CD4-positive, alpha-beta memory T cell (primary cell): ENCODE measurements at regions of chr16 and their contacts with region 1.

Region 1: GRCh38 chr16:78770353-78771091 is 671.1 kb downstream of the WWOX start:
- DNase-seq: peak; percentile 73 to 80 (median 77)
- H3K4me3 ChIP-seq: no peak overlapping the region
- H3K4me3 Mint-ChIP-seq: peak overlapping the region in 3 of 8 donors; percentile 4 to 48 (median 33)
- H3K27ac ChIP-seq: no peak overlapping the region
- H3K27ac Mint-ChIP-seq: peak overlapping the region; percentile 5 to 83 (median 31)
- H3K4me1 ChIP-seq: peaks cover 24% of the 10 kb centered on the region
- H3K4me1 Mint-ChIP-seq: peaks cover 17 to 30% (median 21%) of the 10 kb centered on the region in 4 donors
- H3K27me3 ChIP-seq: no peaks in the 10 kb centered on the region
- H3K27me3 Mint-ChIP-seq: peaks cover 0 to 2% of the 10 kb centered on the region in 2 donors

Region 2: DNA sequence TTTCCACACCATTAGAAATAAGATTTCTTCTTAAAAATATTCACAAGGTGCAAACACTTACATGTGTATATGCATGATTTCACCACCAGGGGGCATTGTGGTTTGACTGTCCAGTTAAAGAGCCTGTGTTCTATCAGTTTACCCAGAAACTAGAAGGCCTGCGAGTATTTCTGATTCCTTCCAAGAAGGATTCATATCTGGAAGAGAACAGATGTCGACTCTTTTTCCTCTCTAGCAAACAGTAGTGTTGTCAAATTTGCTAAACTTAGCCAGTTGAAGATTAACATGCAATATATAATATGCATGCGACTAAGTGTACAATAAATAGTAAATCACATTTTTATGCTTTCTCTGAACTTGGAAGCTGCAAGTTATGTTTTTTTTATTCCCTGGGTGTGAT is 266.9 kb before region 1 on chr16:
- CTCF ChIA-PET with region 1: interaction called, 51 read pairs
- POLR2A ChIA-PET with region 1: no interaction called
- intact Hi-C with region 1: loop called (anchors 1 kb)
- DNase-seq: peak; percentile 41 to 54 (median 48)
- H3K4me3 ChIP-seq: no peak overlapping the region
- H3K4me3 Mint-ChIP-seq: no peak overlapping the region
- H3K27ac ChIP-seq: no peak overlapping the region
- H3K27ac Mint-ChIP-seq: no peak overlapping the region
- H3K4me1 ChIP-seq: no peaks in the 10 kb centered on the region
- H3K4me1 Mint-ChIP-seq: no peaks in the 10 kb centered on the region
- H3K27me3 ChIP-seq: no peaks in the 10 kb centered on the region
- H3K27me3 Mint-ChIP-seq: no peaks in the 10 kb centered on the region

Region 3: GRCh38 chr16:78742501-78743283 is 27.8 kb before region 1 on chr16:
- CTCF ChIA-PET with region 1: interaction called, 13 read pairs
- POLR2A ChIA-PET with region 1: interaction called, 7 read pairs
- intact Hi-C with region 1: loop called (anchors 1 kb)
- DNase-seq: peak; percentile 73 to 91 (median 80)
- H3K4me3 ChIP-seq: peak overlapping the region; percentile 64 to 82
- H3K4me3 Mint-ChIP-seq: peak overlapping the region; percentile 81 to 90 (median 88)
- H3K27ac ChIP-seq: peak overlapping the region; percentile 81
- H3K27ac Mint-ChIP-seq: peak overlapping the region; percentile 93 to 99 (median 98)
- H3K4me1 ChIP-seq: peaks cover 33% of the 10 kb centered on the region
- H3K4me1 Mint-ChIP-seq: peaks cover 26 to 48% (median 30%) of the 10 kb centered on the region in 4 donors
- H3K27me3 ChIP-seq: no peaks in the 10 kb centered on the region
- H3K27me3 Mint-ChIP-seq: no peaks in the 10 kb centered on the region

Region 4: DNA sequence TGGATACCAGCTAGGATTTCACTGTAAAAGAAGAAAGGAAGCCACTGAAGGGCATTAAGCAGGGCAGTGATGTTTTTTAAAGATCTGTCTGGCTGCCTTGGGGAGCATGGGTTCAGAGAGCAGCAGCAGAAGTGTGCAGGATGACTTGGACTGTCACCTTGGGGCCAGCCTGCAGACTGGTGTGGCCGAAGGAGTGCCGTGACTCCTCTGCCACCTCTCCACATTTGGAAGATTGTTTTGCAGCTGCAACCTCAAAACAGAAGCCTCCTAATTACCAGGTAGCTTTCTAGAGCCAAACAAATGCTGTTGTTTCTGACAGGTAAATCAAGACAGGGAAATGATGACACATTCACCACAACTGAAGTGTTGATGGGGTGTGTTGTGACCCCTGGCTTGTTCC is 10.3 kb after region 1 on chr16:
- CTCF ChIA-PET with region 1: interaction called, 20 read pairs
- POLR2A ChIA-PET with region 1: interaction called, 4 read pairs
- intact Hi-C with region 1: no loop called
- DNase-seq: no peak
- H3K4me3 ChIP-seq: no peak overlapping the region
- H3K4me3 Mint-ChIP-seq: no peak overlapping the region
- H3K27ac ChIP-seq: no peak overlapping the region
- H3K27ac Mint-ChIP-seq: peak overlapping the region in 1 of 7 donors; percentile 69
- H3K4me1 ChIP-seq: peaks cover 8% of the 10 kb centered on the region
- H3K4me1 Mint-ChIP-seq: peaks cover 9 to 18% (median 13%) of the 10 kb centered on the region in 4 donors
- H3K27me3 ChIP-seq: no peaks in the 10 kb centered on the region
- H3K27me3 Mint-ChIP-seq: peaks cover 6 to 10% of the 10 kb centered on the region in 2 donors

Region 5: GRCh38 chr16:78945336-78945735 is 174.8 kb after region 1 on chr16:
- CTCF ChIA-PET with region 1: no interaction called
- POLR2A ChIA-PET with region 1: no interaction called
- intact Hi-C with region 1: no loop called
- DNase-seq: no peak
- H3K4me3 ChIP-seq: no peak overlapping the region
- H3K4me3 Mint-ChIP-seq: no peak overlapping the region
- H3K27ac ChIP-seq: no peak overlapping the region
- H3K27ac Mint-ChIP-seq: no peak overlapping the region
- H3K4me1 ChIP-seq: no peaks in the 10 kb centered on the region
- H3K4me1 Mint-ChIP-seq: no peaks in the 10 kb centered on the region
- H3K27me3 ChIP-seq: no peaks in the 10 kb centered on the region
- H3K27me3 Mint-ChIP-seq: no peaks in the 10 kb centered on the region